ENCODE measurements at regions of chr14 and their contacts with region 1.

Region 1: DNA sequence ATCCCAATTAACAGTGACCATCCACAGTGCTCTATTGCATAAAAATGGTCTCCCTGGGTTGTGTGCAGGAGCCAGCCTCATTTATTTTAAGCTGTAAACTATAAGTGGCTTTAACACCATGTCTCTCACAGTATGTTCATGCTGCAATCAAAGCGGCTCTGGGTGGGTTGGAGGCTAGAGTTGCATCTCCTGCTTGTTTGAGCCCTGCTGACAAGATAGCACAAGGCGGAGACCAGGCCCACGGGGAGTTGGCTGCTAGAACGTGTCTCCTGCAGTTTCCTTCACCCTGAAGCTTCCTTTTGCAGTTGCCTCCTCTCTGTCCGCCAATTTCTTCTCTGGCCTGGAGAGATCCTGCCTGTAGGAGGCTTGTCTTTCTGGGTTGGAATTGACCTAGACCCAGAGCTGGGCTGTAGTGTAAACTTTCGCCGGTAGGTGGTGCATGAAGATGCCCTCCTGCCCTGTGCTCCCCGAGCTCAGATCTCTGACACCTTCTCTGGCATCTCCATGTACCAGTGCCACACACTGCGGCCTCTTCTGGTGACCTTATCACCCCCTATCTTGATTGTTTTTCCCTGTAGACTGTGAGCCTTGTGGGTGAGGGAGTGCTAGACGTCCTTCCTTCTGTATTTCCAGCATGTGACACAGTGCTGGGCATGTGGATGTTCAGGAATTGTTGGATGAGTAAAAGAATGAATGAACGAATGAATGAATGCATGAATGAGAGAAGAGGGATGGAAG is 10.3 kb downstream of the OTUB2 start:
- DNase-seq: peak; percentile 86
- ATAC-seq: peak; percentile 97
- H3K4me3 Mint-ChIP-seq: no peak overlapping the region
- H3K27ac Mint-ChIP-seq: no peak overlapping the region
- H3K4me1 Mint-ChIP-seq: peaks cover 5% of the 10 kb centered on the region
- H3K27me3 Mint-ChIP-seq: no peaks in the 10 kb centered on the region

Region 2: GRCh38 chr14:93772263-93772662 is 264.2 kb before region 1 on chr14:
- CTCF ChIA-PET with region 1: no interaction called
- DNase-seq: no peak
- ATAC-seq: no peak
- H3K4me3 Mint-ChIP-seq: no peak overlapping the region
- H3K27ac Mint-ChIP-seq: no peak overlapping the region
- H3K4me1 Mint-ChIP-seq: no peaks in the 10 kb centered on the region
- H3K27me3 Mint-ChIP-seq: no peaks in the 10 kb centered on the region

Region 3: DNA sequence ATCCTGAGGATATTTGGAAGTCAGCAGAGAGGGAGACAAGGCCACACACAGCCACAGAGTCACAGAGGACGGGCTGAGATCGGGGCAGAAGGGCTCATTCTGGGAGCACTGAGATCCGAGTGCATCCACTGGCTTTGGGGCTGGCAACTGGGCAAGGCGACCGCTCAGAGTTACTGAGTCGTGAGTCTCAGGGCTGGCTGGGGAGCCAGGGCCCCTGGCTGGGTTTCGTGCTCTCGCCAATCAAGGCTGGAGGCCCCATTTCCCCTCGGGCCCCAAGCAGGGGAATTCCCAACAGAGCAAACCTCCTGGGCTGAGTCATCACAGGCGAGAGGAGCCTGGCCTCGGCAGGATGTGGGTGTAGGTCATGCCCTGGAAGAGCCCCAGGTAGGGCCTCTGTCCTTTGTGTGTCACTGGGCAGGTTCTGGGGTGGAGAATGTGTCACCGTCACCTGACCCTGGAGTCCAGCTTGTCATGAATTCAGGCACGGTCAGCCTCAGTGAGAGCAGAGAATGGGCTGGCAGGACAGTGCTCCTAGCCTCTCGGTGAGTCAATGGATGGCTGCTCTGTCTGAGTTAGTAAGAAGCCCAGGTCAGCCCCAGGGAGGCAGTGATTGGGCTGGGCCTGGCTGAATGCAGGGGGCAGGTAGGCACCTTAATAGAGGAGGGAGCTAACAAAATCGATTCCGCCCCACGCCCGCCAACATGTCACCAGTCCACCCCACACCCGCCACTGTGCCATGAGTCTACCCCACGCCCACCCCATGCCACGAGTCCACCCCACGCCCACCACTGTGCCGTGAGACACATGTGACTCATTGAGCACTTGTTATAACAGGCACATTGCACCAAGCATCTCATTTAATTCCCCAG is 77.0 kb before region 1 on chr14:
- CTCF ChIA-PET with region 1: no interaction called
- DNase-seq: peak; percentile 98
- ATAC-seq: peak; percentile 71
- H3K4me3 Mint-ChIP-seq: peak overlapping the region; percentile 67
- H3K27ac Mint-ChIP-seq: peak overlapping the region; percentile 99
- H3K4me1 Mint-ChIP-seq: peaks cover 93% of the 10 kb centered on the region
- H3K27me3 Mint-ChIP-seq: no peaks in the 10 kb centered on the region

Region 4: GRCh38 chr14:94021001-94021400 is 15.5 kb before region 1 on chr14:
- CTCF ChIA-PET with region 1: interaction called, 45 read pairs
- DNase-seq: no peak
- ATAC-seq: no peak
- H3K4me3 Mint-ChIP-seq: no peak overlapping the region
- H3K27ac Mint-ChIP-seq: peak overlapping the region; percentile 76
- H3K4me1 Mint-ChIP-seq: peaks cover 42% of the 10 kb centered on the region
- H3K27me3 Mint-ChIP-seq: peaks cover 8% of the 10 kb centered on the region

Region 5: DNA sequence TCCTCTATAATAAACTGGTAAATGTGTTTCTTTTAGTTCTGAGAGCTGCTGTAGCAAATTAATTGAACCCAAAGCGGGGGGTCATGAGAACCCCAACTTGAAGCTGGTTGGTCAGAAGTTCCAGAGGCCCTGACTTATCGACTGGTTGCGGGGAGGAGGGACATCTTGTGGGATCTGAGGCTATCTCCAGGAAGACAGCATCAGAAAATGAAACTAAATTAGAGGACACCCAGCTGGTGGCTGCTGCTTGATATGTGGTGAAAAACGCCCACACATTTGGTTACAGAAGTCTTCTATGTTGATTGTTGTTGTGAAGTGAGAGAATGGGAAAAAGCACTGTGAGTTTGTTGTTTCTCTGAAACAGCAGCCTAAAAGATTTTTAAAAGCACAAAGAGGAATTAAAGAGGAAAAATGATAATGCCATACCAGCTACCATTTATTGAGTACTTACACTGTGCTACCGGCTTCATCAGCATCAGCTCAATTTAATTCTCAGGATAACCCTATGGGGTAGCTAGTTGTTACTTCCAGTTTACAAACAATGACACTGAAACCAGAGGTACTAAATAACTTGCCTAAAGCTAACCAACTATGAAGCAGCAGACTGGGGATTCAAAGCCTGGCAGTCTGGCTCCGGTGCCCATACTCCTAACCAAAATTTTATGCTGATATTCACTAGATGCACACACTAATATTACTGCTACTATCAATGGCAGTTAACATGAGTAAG is 20.3 kb after region 1 on chr14:
- CTCF ChIA-PET with region 1: interaction called, 23 read pairs
- DNase-seq: peak; percentile 80
- ATAC-seq: peak; percentile 84
- H3K4me3 Mint-ChIP-seq: peak overlapping the region; percentile 10
- H3K27ac Mint-ChIP-seq: peak overlapping the region; percentile 72
- H3K4me1 Mint-ChIP-seq: peaks cover 66% of the 10 kb centered on the region
- H3K27me3 Mint-ChIP-seq: no peaks in the 10 kb centered on the region

Region 6: GRCh38 chr14:94129111-94129757 is 92.8 kb after region 1 on chr14 and contains the start of gene IFI27L2:
- CTCF ChIA-PET with region 1: interaction called, 90 read pairs
- DNase-seq: peak; percentile 88
- ATAC-seq: peak; percentile 98
- H3K4me3 Mint-ChIP-seq: peak within 1 kb of the TSS; percentile 82
- H3K27ac Mint-ChIP-seq: peak within 1 kb of the TSS; percentile 84
- H3K4me1 Mint-ChIP-seq: peaks cover 23% of the 10 kb centered on the region
- H3K27me3 Mint-ChIP-seq: peaks cover 19% of the 10 kb centered on the region
- total RNA-seq, gene IFI27L2: 95.5 to 112 TPM

Region 7: GRCh38 chr14:94143239-94143638 is 106.8 kb after region 1 on chr14:
- CTCF ChIA-PET with region 1: interaction called, 150 read pairs
- DNase-seq: no peak
- ATAC-seq: no peak
- H3K4me3 Mint-ChIP-seq: no peak overlapping the region
- H3K27ac Mint-ChIP-seq: no peak overlapping the region
- H3K4me1 Mint-ChIP-seq: peaks cover 25% of the 10 kb centered on the region
- H3K27me3 Mint-ChIP-seq: peaks cover 4% of the 10 kb centered on the region

Measured in activated CD8-positive, alpha-beta memory T cell treated with anti-CD3 and anti-CD28 coated beads, Interleukin-2, amount 10 ng/mL, durations not matched to agents 7 days and 5 days (primary cell).